CD14-positive monocyte (primary cell): ENCODE measurements at regions of chr3 and their contacts with region 1.

Region 1: GRCh38 chr3:71548705-71549384 is 34.7 kb downstream of the FOXP1 start:
- DNase-seq: peak in 1 of 3 donors; percentile 31
- H3K4me3 ChIP-seq: peak overlapping the region in 1 of 3 experiments; percentile 70
- H3K4me3 Mint-ChIP-seq: no peak overlapping the region
- H3K27ac ChIP-seq: peak overlapping the region; percentile 86 to 87
- H3K27ac Mint-ChIP-seq: peak overlapping the region; percentile 90 to 98 (median 95)
- H3K4me1 ChIP-seq: peaks cover 71 to 84% of the 10 kb centered on the region in 2 donors
- H3K4me1 Mint-ChIP-seq: peaks cover 70% of the 10 kb centered on the region
- H3K27me3 ChIP-seq: no peaks in the 10 kb centered on the region
- H3K27me3 Mint-ChIP-seq: no peaks in the 10 kb centered on the region
- CTCF ChIP-seq: no peak

Region 2: GRCh38 chr3:71397046-71397445 is 151.8 kb before region 1 on chr3:
- intact Hi-C with region 1: no loop called
- DNase-seq: peak in 1 of 3 donors; percentile 23
- H3K4me3 ChIP-seq: no peak overlapping the region
- H3K4me3 Mint-ChIP-seq: no peak overlapping the region
- H3K27ac ChIP-seq: no peak overlapping the region
- H3K27ac Mint-ChIP-seq: no peak overlapping the region
- H3K4me1 ChIP-seq: peaks cover 31 to 36% of the 10 kb centered on the region in 2 donors
- H3K4me1 Mint-ChIP-seq: peaks cover 56% of the 10 kb centered on the region
- H3K27me3 ChIP-seq: no peaks in the 10 kb centered on the region
- H3K27me3 Mint-ChIP-seq: no peaks in the 10 kb centered on the region
- CTCF ChIP-seq: peak; percentile 68

Region 3: DNA sequence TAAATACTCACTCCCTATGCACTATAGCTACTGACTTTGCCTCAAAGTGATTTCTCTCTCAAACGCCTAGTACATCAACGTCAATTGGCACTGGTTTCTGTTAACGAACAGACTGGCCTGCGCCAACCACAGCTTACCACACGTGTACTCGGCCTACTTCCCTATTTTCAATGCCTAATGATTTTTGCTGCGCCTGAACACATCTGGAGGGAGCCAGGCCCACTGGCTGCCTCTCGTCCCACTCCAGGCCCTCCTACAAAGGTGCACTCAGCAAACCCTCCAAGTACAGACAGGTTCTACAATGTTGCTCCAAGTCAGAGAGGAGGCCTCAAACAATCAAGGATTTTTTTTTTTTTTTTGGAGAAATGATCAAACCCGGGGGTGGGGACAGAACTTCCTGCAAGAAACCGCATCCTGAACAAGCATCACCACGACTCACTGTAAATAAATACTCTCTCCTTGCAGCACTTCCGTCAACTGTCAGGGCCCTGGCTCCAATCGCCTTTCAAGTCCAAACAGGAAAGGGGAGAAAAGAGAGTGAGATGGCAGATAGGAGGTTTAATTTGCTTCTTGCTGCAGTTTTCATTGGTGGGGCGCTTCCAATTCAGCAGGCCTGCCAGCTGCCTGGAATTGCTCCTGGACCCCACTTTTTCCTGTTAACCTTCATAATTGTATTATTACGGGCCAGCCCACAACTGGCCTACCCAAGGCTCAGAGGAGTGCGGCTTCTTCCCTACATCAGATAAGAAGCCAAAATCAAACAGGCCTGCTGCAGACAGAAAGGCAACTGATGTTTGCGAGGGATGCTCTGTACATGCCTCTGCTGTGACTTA is 104.6 kb before region 1 on chr3:
- intact Hi-C with region 1: loop called in 1 of 2 experiments (anchors 5 kb)
- DNase-seq: peak; percentile 83 to 91 (median 87)
- H3K4me3 ChIP-seq: peak overlapping the region in 1 of 3 experiments; percentile 55
- H3K4me3 Mint-ChIP-seq: peak overlapping the region; percentile 65 to 79
- H3K27ac ChIP-seq: peak overlapping the region; percentile 80 to 93
- H3K27ac Mint-ChIP-seq: peak overlapping the region; percentile 98 to 100 (median 99)
- H3K4me1 ChIP-seq: peaks cover 96 to 97% of the 10 kb centered on the region in 2 donors
- H3K4me1 Mint-ChIP-seq: peaks cover 95% of the 10 kb centered on the region
- H3K27me3 ChIP-seq: no peaks in the 10 kb centered on the region
- H3K27me3 Mint-ChIP-seq: peaks cover 0 to 2% (median 0%) of the 10 kb centered on the region in 3 donors
- CTCF ChIP-seq: no peak

Region 4: DNA sequence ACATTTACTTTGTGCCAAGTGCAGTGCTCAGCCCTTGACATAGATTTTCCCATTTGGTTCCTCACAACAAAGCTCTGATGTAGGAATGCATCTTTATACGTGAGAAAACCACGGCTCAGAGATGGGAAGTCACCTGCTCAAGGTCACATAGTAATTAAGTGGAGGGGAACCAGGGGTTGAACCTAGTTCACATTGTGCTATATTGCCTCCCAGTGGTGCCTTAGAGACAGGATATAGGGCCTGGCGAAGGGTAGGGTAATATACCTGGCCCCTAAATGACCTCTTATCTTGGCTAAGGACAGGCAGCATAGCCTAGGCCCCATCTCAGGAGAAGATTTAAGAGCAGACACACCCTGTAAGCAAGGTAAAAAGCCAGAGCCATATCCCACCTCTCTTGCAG is 36.8 kb before region 1 on chr3:
- intact Hi-C with region 1: no loop called
- DNase-seq: no peak
- H3K4me3 ChIP-seq: no peak overlapping the region
- H3K4me3 Mint-ChIP-seq: no peak overlapping the region
- H3K27ac ChIP-seq: peak overlapping the region in 1 of 2 donors; percentile 59
- H3K27ac Mint-ChIP-seq: peak overlapping the region in 1 of 7 donors; percentile 45
- H3K4me1 ChIP-seq: peaks cover 44 to 53% of the 10 kb centered on the region in 2 donors
- H3K4me1 Mint-ChIP-seq: peaks cover 31% of the 10 kb centered on the region
- H3K27me3 ChIP-seq: no peaks in the 10 kb centered on the region
- H3K27me3 Mint-ChIP-seq: no peaks in the 10 kb centered on the region
- CTCF ChIP-seq: no peak